Ascending aorta (tissue), 2 donors: ENCODE measurements at regions of chr17 and their contacts with region 1.

Region 1: DNA sequence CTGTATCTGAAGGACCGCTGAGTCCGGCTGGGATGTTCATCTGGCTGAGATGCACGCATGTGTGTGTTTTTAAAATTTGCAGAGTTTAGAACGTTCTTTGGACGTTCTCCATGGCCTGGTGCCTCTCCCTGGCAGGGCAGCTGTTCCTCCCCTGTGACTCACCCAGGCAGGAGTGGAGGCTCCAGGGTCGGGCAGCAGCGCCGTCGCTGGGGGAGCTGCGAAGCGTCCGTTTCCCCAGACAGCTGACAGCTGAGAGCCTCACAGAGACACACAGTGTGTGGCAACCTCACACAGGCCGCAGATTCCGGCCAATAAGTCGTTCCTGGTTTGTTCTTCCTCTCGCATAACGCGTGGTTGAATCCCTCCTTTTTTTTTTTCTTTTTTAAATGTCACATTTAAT is 80.6 kb downstream of the OR1D5 start:
- DNase-seq: peak in 1 of 2 donors; percentile 83
- H3K4me3 ChIP-seq: peak overlapping the region in 1 of 2 donors; percentile 36
- H3K27ac ChIP-seq: peak overlapping the region; percentile 6 to 19
- H3K4me1 ChIP-seq: no peaks in the 10 kb centered on the region
- H3K27me3 ChIP-seq: no peaks in the 10 kb centered on the region
- CTCF ChIP-seq: peak; percentile 6 to 62 (median 45)

Region 2: DNA sequence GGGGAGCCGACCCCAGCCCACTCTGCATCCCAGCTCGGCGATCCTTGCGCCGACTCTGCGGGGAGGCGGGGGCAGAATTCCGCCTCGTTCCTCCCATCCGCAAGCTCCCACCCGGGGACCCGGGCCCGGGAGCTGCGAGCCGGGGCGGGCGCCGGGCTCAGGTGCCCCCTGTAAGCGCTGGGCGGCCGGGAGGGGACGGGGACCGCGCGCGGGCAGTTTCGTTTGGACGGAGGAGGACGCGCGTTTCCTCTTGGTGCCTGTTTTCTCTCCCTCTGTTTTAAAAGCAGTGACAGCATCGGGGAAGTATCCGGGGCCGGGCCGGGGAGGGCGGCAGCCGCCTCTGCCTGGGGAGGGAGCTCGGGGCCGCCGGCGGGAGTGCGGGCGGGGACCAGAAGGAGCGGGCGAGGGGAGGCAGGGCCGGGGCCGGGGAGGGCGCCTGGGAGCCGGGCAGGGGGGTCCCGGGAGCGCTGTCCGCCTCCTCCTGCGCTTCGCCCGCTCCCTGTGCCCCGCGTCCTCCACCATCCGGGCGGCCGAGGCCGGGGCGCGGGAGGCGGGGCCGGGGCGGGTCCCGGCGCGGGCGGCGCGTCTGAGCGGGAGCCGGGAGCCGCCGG is 129.6 kb before region 1 on chr17:
- intact Hi-C with region 1: loop called (anchors 2 kb)
- DNase-seq: peak in 1 of 2 donors; percentile 81
- H3K4me3 ChIP-seq: peak overlapping the region; percentile 56 to 85
- H3K27ac ChIP-seq: peak overlapping the region; percentile 79 to 82
- H3K4me1 ChIP-seq: peaks cover 10 to 13% of the 10 kb centered on the region in 2 donors
- H3K27me3 ChIP-seq: no peaks in the 10 kb centered on the region
- CTCF ChIP-seq: no peak

Region 3: GRCh38 chr17:2929881-2930533 is 52.8 kb before region 1 on chr17:
- intact Hi-C with region 1: no loop called
- DNase-seq: no peak
- H3K4me3 ChIP-seq: no peak overlapping the region
- H3K27ac ChIP-seq: no peak overlapping the region
- H3K4me1 ChIP-seq: no peaks in the 10 kb centered on the region
- H3K27me3 ChIP-seq: no peaks in the 10 kb centered on the region
- CTCF ChIP-seq: peak in 2 of 3 experiments; percentile 10 to 35

Region 4: GRCh38 chr17:3012926-3013581 is 30.2 kb after region 1 on chr17:
- intact Hi-C with region 1: no loop called
- DNase-seq: peak in 1 of 2 donors; percentile 72
- H3K4me3 ChIP-seq: no peak overlapping the region
- H3K27ac ChIP-seq: no peak overlapping the region
- H3K4me1 ChIP-seq: no peaks in the 10 kb centered on the region
- H3K27me3 ChIP-seq: no peaks in the 10 kb centered on the region
- CTCF ChIP-seq: peak; percentile 65 to 83 (median 80)